Tibial artery (tissue), 4 donors: ENCODE measurements at regions of chr1 and their contacts with region 1.

Region 1: DNA sequence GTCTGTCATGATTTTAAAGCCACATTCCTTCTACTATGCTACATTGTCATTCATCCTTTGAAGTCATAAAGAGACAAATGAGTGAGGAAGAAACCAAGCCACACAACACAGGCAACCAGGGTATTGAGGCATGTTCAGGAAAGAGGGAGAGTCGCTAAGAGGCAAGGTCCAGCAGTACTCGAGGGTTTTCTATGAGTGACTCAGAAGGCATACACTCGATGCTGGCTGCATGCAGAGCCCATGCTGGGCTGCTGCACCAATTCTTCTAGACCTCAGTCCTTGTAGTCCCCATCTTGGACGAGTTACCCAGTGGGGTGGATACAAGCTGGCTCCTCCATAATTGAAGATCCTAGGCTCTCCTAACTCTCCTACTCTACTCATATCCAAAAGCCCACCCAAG is 57.6 kb downstream of the OLFML2B start:
- DNase-seq: no peak
- H3K4me3 ChIP-seq: no peak overlapping the region
- H3K27ac ChIP-seq: no peak overlapping the region
- H3K4me1 ChIP-seq: peaks cover 0 to 45% (median 25%) of the 10 kb centered on the region in 4 donors
- H3K27me3 ChIP-seq: no peaks in the 10 kb centered on the region
- CTCF ChIP-seq: no peak

Region 2: DNA sequence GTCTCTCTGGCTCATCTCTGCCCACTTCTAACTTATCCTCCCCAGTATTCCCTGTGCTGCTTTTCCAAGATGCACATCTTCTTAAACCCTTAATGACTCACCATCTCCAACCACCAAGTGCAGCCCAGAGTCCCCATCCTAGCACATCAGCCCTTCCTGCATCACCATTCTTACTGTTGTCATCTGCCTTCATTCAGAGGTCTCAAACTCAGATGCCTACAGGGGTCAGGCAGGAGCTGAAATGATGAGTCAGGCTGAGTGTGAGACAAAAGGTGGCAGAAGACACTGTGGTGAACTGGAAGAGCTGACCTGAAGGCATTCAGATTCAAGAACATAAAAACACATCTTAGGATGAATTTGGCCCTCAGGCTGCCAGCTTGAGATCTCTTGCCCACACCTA is 23.0 kb after region 1 on chr1:
- intact Hi-C with region 1: no loop called
- DNase-seq: no peak
- H3K4me3 ChIP-seq: no peak overlapping the region
- H3K27ac ChIP-seq: no peak overlapping the region
- H3K4me1 ChIP-seq: peaks cover 0 to 6% (median 3%) of the 10 kb centered on the region in 4 donors
- H3K27me3 ChIP-seq: no peaks in the 10 kb centered on the region
- CTCF ChIP-seq: no peak

Region 3: DNA sequence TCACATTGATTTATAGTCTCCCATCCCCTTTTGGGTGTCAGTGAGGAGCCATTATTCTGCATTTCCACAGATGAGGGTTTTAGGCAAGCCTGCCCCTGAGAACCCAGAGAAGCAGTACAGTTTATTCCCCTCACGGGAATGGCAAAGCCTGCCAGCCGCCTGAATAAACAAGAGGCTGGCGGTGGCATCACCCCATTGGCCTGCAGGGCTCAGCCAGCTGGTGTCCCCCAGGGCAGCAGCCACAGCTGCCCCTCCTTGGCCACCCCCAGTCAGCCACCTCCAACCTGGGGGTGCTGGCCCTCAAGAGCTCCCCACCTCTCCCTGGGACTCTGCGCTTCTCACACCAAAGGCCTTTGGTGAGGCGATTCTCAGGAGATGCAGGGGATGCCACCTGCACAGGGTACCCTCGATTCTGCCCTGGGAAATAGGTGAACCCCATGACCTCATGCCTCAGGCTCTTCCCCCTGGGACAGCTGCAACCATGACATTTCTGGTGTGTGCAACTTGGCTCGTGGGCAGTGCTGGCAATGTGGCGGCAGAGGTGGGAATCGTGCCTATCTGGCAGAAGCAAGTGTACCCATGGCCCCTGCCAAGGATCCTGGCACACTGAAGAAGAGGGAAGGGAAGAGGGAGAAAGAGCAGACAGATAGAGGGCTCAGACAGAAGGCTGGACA is 43.6 kb after region 1 on chr1:
- intact Hi-C with region 1: loop called (anchors 5 kb)
- DNase-seq: peak in 1 of 2 donors; percentile 85
- H3K4me3 ChIP-seq: no peak overlapping the region
- H3K27ac ChIP-seq: peak overlapping the region; percentile 69 to 79
- H3K4me1 ChIP-seq: peaks cover 0 to 52% (median 38%) of the 10 kb centered on the region in 4 donors
- H3K27me3 ChIP-seq: no peaks in the 10 kb centered on the region
- CTCF ChIP-seq: no peak